ENCODE measurements at regions of chr15 and their contacts with region 1.

Region 1: DNA sequence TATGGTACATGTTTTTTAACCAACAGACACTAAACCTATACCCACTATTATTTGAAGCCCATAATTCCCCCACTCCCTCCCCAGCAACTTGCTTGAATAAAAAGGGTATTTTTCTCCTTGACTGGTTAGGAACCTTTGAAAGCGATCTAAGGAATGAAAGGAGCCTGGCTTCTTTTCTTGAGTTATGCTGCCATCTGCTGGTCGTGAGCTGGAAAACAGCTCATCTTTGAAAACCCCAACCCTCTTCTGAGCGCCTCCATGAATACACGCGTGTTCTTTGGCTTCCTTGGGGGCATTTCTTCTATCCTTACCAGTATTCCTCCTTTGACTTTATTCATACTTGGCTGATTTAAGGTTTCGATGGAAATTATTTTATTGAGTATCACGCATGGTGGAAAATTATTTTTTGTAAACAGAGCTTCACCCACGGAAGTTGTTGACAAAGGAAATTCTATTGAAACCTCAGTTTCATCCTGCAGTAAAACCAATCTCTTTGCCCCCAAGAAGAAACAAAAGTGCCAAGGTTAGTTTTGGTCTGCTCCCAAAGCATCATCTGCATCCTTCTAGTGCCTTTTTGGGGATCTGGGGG is 171.6 kb downstream of the SV2B start:
- DNase-seq: peak in 4 of 5 donors; percentile 24 to 44 (median 38)
- ATAC-seq: peak in 3 of 4 donors; percentile 44 to 82 (median 74)
- H3K4me3 ChIP-seq: no peak overlapping the region
- H3K27ac ChIP-seq: no peak overlapping the region
- H3K4me1 ChIP-seq: peaks cover 0 to 7% (median 0%) of the 10 kb centered on the region in 12 donors
- H3K27me3 ChIP-seq: no peaks in the 10 kb centered on the region
- CTCF ChIP-seq: peak; percentile 66 to 87 (median 83)
- POLR2A ChIP-seq: no peak

Region 2: GRCh38 chr15:91055548-91056331 is 215.9 kb before region 1 on chr15:
- intact Hi-C with region 1: loop called (anchors 1 to 2 kb)
- DNase-seq: peak in 4 of 5 donors; percentile 45 to 60 (median 56)
- ATAC-seq: peak; percentile 42 to 84 (median 82)
- H3K4me3 ChIP-seq: no peak overlapping the region
- H3K27ac ChIP-seq: no peak overlapping the region
- H3K4me1 ChIP-seq: peaks cover 0 to 3% (median 0%) of the 10 kb centered on the region in 12 donors
- H3K27me3 ChIP-seq: peaks cover 0 to 27% (median 3%) of the 10 kb centered on the region in 9 donors
- CTCF ChIP-seq: peak; percentile 63 to 85 (median 78)
- POLR2A ChIP-seq: no peak

Region 3: DNA sequence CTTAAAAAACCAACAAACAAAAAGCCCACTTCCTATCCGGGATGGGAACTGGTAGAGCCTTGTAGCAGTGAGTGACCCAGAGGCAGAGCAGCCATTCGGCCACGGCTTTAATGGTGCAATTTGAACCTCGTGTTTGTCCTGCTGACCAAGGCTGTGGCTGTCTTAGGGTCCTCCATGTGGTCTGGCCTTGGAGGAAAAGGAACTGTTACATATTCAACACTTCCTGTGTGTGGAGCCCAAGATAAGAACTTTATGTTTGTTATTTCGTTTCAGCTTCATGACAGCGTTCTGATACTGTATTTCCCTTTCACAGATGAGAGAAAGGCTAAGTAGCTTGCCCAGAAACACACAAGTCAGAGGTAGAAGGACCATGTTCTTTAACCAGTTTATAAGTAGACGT is 98.2 kb after region 1 on chr15:
- intact Hi-C with region 1: no loop called
- DNase-seq: no peak
- ATAC-seq: no peak
- H3K4me3 ChIP-seq: no peak overlapping the region
- H3K27ac ChIP-seq: no peak overlapping the region
- H3K4me1 ChIP-seq: peaks cover 0 to 9% (median 0%) of the 10 kb centered on the region in 12 donors
- H3K27me3 ChIP-seq: no peaks in the 10 kb centered on the region
- CTCF ChIP-seq: no peak
- POLR2A ChIP-seq: no peak